ENCODE measurements at regions of chr1 and their contacts with region 1.

Region 1: DNA sequence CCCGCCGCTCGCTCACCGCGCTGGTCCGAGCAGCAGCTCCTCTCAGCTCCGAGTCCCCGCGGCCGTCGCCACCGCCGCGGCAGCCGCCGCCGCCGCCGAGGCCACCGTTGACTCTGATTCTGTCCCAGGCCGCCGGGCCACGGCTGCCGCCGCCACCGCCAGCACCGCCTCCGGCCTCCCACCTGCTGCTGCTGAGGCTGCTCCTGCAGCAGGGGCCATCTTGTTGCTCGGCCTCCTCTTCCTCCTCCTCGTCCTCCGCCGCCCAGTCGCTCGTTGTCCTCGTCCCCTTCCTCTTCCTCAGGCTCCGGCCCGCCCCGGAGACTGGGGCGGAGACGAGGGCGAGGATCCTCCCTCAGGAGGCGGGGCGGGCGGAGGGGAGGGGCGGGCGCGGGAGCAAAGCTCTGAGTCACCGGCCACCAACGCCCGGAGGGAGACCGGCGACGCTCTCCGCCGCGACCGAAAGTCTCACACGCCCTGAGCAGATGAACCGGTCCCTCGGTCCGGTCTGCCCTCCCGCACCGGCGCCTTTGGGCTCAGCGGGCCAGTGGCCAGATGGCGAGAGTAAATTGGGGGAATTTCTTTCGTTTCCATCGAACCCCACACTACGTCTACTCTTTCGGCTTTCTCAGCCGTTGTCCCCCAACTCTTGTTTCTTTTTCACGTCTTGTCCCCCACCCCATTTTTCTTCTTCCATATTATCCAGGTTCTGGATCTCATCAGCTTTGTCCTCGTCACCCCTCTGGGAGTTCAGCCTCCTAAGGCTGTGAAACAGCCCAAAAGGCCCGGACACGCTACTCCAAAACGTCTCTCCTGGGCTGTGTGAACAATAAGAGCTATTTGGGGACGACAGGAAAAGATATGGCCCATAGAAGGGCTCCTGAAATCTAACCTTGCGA is at the start of gene RC3H1:
- DNase-seq: peak; percentile 84 to 91 (median 85)
- H3K4me3 ChIP-seq: peak within 1 kb of the TSS; percentile 65 to 100
- H3K4me3 Mint-ChIP-seq: peak within 1 kb of the TSS; percentile 98 to 100 (median 98)
- H3K27ac ChIP-seq: peak within 1 kb of the TSS; percentile 80
- H3K27ac Mint-ChIP-seq: peak within 1 kb of the TSS; percentile 98 to 99 (median 99)
- H3K4me1 ChIP-seq: peaks cover 41% of the 10 kb centered on the region
- H3K4me1 Mint-ChIP-seq: peaks cover 30 to 60% (median 39%) of the 10 kb centered on the region in 4 donors
- H3K27me3 ChIP-seq: no peaks in the 10 kb centered on the region
- H3K27me3 Mint-ChIP-seq: no peaks in the 10 kb centered on the region
- total RNA-seq, gene RC3H1: 49.2 TPM

Region 2: GRCh38 chr1:173476664-173477285 is 545.6 kb before region 1 on chr1:
- CTCF ChIA-PET with region 1: no interaction called
- POLR2A ChIA-PET with region 1: interaction called, 3 read pairs
- intact Hi-C with region 1: loop called (anchors 5 kb)
- DNase-seq: peak; percentile 77 to 90 (median 84)
- H3K4me3 ChIP-seq: peak overlapping the region; percentile 93
- H3K4me3 Mint-ChIP-seq: peak overlapping the region; percentile 89 to 94 (median 91)
- H3K27ac ChIP-seq: peak overlapping the region; percentile 89
- H3K27ac Mint-ChIP-seq: peak overlapping the region; percentile 89 to 95 (median 91)
- H3K4me1 ChIP-seq: peaks cover 61% of the 10 kb centered on the region
- H3K4me1 Mint-ChIP-seq: peaks cover 38 to 68% (median 55%) of the 10 kb centered on the region in 4 donors
- H3K27me3 ChIP-seq: no peaks in the 10 kb centered on the region
- H3K27me3 Mint-ChIP-seq: no peaks in the 10 kb centered on the region

Region 3: DNA sequence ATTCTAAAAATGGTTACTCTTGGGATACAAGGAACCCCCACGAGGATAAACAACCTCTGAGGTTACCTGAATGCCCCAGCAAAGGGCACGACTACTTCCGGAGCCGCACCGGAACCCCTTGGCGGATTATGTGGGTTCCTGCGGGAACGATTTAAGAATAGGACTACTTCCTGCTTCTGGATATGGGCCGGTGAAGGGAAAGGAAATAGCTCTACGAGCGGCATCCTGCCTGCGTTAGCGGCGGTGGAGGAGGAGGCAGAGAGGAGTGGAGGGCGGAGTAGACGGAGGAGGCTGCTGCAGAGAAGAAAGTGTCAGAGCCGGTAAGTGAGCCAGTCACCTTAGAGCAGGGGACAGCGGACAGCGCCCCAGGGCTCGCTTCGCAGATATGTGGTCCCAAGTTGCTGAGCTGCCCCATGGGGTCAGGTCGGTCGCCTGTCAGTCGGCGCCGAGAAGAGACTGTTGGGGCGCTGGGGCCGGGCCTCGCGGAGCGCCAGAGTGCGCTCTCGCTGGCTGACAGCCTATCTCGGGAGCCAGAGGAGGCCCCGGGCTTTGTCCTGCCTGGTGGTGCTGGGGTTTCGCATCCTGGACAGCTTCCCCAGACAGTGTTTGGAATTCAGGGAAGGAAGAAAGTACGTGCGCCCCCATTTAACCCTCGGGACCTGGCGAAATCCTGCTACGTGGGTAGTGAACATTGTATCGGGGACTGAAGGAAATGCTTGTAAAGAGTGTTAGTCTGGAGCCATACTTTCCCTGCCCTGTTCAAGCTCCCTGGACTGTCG is 307.4 kb before region 1 on chr1 and contains the start of gene KLHL20:
- CTCF ChIA-PET with region 1: no interaction called
- POLR2A ChIA-PET with region 1: interaction called, 9 read pairs
- intact Hi-C with region 1: loop called (anchors 5 kb)
- DNase-seq: peak; percentile 89 to 93 (median 91)
- H3K4me3 ChIP-seq: peak within 1 kb of the TSS; percentile 47 to 73
- H3K4me3 Mint-ChIP-seq: peak within 1 kb of the TSS; percentile 95 to 100 (median 97)
- H3K27ac ChIP-seq: peak within 1 kb of the TSS; percentile 78
- H3K27ac Mint-ChIP-seq: peak within 1 kb of the TSS; percentile 92 to 98 (median 97)
- H3K4me1 ChIP-seq: peaks cover 34% of the 10 kb centered on the region
- H3K4me1 Mint-ChIP-seq: peaks cover 18 to 33% (median 25%) of the 10 kb centered on the region in 4 donors
- H3K27me3 ChIP-seq: peaks cover 5% of the 10 kb centered on the region
- H3K27me3 Mint-ChIP-seq: peaks cover 14 to 15% of the 10 kb centered on the region in 2 donors
- total RNA-seq, gene KLHL20: 41.0 to 43.9 TPM

Region 4: DNA sequence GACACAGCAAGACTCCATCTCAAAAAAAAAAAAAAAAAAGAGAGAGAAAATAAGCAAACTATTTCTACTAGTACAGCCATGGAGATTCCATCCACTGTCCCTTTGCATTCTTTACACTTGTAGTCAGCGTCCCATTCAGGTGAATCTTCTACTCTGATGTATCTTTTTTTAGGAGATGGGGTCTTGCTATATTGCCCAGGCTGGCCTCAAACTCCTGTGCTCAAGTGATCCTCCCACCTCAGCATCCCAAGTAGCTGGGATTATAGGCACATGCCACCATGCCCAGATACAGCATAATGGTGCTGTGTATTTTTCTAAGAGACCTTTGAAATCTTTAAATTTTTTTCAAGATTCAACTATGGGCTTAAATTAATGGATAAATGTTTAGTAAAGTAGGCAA is 189.6 kb before region 1 on chr1:
- CTCF ChIA-PET with region 1: no interaction called
- POLR2A ChIA-PET with region 1: no interaction called
- intact Hi-C with region 1: no loop called
- DNase-seq: no peak
- H3K4me3 ChIP-seq: no peak overlapping the region
- H3K4me3 Mint-ChIP-seq: no peak overlapping the region
- H3K27ac ChIP-seq: no peak overlapping the region
- H3K27ac Mint-ChIP-seq: no peak overlapping the region
- H3K4me1 ChIP-seq: peaks cover 3% of the 10 kb centered on the region
- H3K4me1 Mint-ChIP-seq: peaks cover 0 to 2% (median 0%) of the 10 kb centered on the region in 4 donors
- H3K27me3 ChIP-seq: no peaks in the 10 kb centered on the region
- H3K27me3 Mint-ChIP-seq: no peaks in the 10 kb centered on the region

Region 5: DNA sequence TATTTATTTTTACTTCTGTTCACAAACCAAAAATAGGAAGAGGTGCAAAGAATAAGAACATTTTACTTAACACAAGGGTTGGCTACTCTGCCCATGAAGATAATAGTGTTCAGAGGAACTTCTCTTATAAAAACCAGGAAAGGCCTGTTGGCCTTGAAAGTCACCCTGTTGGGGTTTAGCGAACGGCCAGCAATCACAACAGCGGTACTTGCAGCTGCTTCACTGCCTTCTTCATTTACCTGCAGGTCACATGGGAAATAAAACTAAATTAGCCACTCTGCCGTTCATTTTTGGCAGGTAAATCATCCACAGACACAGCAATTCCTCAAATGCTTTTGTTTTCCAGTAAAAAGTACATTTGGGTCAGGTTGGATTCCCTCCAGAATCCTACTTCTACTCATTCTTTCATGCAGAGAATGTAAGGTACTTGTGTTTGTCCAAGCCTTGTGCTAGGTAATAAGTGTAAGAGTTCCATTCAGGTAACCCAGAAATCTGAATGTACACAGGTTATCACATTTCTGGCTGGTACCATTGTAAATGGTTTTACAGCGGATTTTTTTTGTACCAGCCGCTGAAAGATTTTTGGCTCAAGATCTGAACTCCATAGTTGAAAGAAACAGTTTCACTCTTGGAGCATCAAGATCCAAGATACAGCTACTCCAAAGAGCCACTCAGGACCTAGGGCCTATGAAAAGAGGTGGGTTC is 118.3 kb before region 1 on chr1:
- CTCF ChIA-PET with region 1: no interaction called
- POLR2A ChIA-PET with region 1: no interaction called
- intact Hi-C with region 1: no loop called
- DNase-seq: no peak
- H3K4me3 ChIP-seq: no peak overlapping the region
- H3K4me3 Mint-ChIP-seq: no peak overlapping the region
- H3K27ac ChIP-seq: no peak overlapping the region
- H3K27ac Mint-ChIP-seq: no peak overlapping the region
- H3K4me1 ChIP-seq: no peaks in the 10 kb centered on the region
- H3K4me1 Mint-ChIP-seq: peaks cover 6 to 17% (median 13%) of the 10 kb centered on the region in 4 donors
- H3K27me3 ChIP-seq: no peaks in the 10 kb centered on the region
- H3K27me3 Mint-ChIP-seq: no peaks in the 10 kb centered on the region

Region 6: DNA sequence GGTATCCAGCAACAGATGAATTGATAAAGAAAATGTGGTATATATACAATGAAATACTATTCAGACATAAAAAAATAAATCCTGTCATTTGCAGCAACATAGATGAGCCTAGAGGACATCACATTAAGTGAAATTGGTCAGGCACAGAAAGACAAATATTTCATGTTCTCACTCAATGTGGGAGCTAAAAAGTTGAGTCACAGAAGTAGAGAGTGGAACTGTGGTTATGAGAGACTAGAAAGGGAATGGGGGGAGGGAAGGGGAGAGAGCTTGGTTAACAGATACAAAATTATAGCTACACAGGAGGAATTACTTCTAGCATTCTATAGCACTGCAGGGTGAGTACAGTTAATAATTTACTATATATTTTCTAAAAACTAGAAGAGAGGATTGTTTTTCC is 68.1 kb before region 1 on chr1:
- CTCF ChIA-PET with region 1: no interaction called
- POLR2A ChIA-PET with region 1: no interaction called
- intact Hi-C with region 1: no loop called
- DNase-seq: no peak
- H3K4me3 ChIP-seq: no peak overlapping the region
- H3K4me3 Mint-ChIP-seq: no peak overlapping the region
- H3K27ac ChIP-seq: no peak overlapping the region
- H3K27ac Mint-ChIP-seq: peak overlapping the region in 2 of 7 donors; percentile 19 to 85
- H3K4me1 ChIP-seq: no peaks in the 10 kb centered on the region
- H3K4me1 Mint-ChIP-seq: peaks cover 0 to 12% (median 7%) of the 10 kb centered on the region in 4 donors
- H3K27me3 ChIP-seq: no peaks in the 10 kb centered on the region
- H3K27me3 Mint-ChIP-seq: no peaks in the 10 kb centered on the region

Region 7: GRCh38 chr1:174036204-174036603 is 13.9 kb after region 1 on chr1:
- CTCF ChIA-PET with region 1: no interaction called
- POLR2A ChIA-PET with region 1: interaction called, 11 read pairs
- intact Hi-C with region 1: no loop called
- DNase-seq: no peak
- H3K4me3 ChIP-seq: no peak overlapping the region
- H3K4me3 Mint-ChIP-seq: no peak overlapping the region
- H3K27ac ChIP-seq: no peak overlapping the region
- H3K27ac Mint-ChIP-seq: no peak overlapping the region
- H3K4me1 ChIP-seq: no peaks in the 10 kb centered on the region
- H3K4me1 Mint-ChIP-seq: no peaks in the 10 kb centered on the region
- H3K27me3 ChIP-seq: no peaks in the 10 kb centered on the region
- H3K27me3 Mint-ChIP-seq: peaks cover 2 to 4% of the 10 kb centered on the region in 2 donors

Region 8: DNA sequence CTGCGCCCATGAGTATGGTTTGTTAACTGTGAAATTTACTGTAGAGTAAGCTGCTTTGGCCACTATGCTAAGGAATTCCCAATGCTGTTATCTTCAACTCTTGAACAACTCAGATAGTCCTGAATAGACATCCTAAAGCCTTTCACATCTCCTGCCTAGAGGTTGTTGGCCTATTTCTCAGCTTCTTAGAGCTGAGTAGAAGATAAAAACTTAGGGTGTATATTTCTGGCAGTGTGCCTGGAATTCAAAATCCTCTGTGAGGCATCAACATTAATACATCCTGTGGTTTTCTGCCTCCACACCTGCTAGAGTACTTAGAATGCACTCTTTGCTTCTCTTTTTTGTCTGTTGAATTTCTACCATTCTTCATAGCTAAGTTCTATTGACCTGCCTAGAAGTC is 45.7 kb after region 1 on chr1:
- CTCF ChIA-PET with region 1: no interaction called
- POLR2A ChIA-PET with region 1: interaction called, 7 read pairs
- intact Hi-C with region 1: loop called (anchors 5 kb)
- DNase-seq: peak in 4 of 5 donors; percentile 20 to 37 (median 36)
- H3K4me3 ChIP-seq: no peak overlapping the region
- H3K4me3 Mint-ChIP-seq: no peak overlapping the region
- H3K27ac ChIP-seq: no peak overlapping the region
- H3K27ac Mint-ChIP-seq: peak overlapping the region in 3 of 7 donors; percentile 9 to 53 (median 31)
- H3K4me1 ChIP-seq: peaks cover 8% of the 10 kb centered on the region
- H3K4me1 Mint-ChIP-seq: peaks cover 6 to 10% (median 9%) of the 10 kb centered on the region in 4 donors
- H3K27me3 ChIP-seq: no peaks in the 10 kb centered on the region
- H3K27me3 Mint-ChIP-seq: peaks cover 3 to 4% of the 10 kb centered on the region in 2 donors

Region 9: DNA sequence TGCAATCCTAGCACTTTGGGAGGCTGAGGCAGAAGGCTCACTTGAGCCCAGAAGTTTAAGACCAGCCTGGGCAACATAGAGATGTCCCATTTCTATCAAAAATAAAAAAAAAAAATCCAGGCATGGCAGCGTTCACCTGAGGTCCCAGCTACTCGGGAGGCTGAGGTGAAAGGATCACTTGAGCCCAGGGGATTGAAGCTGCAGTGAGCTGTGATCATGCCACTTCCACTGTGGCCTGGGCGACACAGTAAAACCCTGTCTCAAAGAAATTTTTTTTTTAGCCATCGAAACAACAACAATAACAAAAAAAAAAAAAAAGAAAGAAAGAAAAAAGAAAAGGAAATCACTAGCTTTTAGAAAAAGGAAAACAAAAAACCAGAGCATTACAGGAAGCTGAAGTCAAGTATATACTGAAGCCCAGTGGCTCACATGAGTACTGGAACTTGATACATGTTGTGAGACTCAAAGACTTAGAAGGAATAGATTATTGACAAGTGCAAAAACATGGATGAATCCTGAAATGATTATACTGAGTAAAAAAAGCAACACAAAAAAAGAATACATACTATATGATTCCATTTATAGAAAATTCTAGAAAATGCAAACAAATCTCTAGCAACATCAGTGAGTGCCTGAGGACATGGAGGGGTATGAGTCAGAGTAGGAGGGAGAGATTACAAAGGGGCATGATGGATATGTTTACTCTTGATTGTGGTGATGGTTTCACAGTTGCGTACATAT is 130.9 kb after region 1 on chr1:
- CTCF ChIA-PET with region 1: interaction called, 6 read pairs
- POLR2A ChIA-PET with region 1: interaction called, 13 read pairs
- intact Hi-C with region 1: no loop called
- DNase-seq: peak in 1 of 5 donors; percentile 19
- H3K4me3 ChIP-seq: no peak overlapping the region
- H3K4me3 Mint-ChIP-seq: peak overlapping the region in 6 of 8 donors; percentile 1 to 47 (median 34)
- H3K27ac ChIP-seq: peak overlapping the region; percentile 21
- H3K27ac Mint-ChIP-seq: peak overlapping the region in 6 of 7 donors; percentile 14 to 63 (median 26)
- H3K4me1 ChIP-seq: peaks cover 42% of the 10 kb centered on the region
- H3K4me1 Mint-ChIP-seq: peaks cover 19 to 38% (median 25%) of the 10 kb centered on the region in 4 donors
- H3K27me3 ChIP-seq: no peaks in the 10 kb centered on the region
- H3K27me3 Mint-ChIP-seq: no peaks in the 10 kb centered on the region

Region 10: DNA sequence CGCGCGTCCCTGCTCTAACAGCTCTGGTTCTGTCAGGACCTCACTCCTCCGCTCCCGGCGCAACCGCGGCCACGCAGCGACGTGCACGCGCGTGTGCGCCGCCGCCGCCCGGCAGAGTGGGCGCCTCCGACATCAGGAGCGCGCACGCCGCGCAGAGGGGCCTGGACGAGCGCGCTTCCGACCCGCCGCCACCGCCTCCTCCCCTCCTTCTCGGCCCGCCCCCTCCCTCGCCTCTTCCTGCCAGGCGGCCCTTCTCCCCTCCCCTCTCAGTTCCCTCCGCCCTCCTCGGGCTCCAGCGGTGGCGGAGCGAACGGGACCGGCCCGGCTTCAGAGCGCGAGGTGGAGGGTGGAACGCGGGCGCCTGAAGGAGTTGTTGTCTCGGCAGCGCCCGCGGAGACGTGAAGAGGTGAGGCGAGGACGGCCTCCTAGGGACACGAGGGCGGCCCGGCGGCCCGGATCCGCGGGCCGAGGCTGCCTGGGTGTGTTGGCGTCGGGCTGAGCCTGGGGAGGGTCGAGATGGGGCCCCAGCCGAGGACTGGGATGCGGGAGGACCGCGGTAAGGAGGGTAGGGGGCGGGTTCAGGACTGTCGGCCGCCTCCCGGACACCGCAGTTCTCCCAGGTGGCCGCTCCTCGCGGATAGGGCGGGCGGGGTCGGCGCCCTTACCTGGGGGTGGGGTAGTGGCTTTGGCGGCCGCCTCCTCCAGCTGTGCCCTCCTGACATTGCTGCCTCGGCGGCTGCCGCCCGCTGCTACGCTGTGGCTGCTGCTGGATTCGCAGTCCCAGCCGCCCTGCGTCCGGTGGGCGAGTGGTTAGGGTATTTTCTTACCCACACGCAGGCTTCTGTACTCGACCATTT is 137.2 kb after region 1 on chr1 and contains the start of gene RABGAP1L:
- CTCF ChIA-PET with region 1: interaction called, 3 read pairs
- POLR2A ChIA-PET with region 1: interaction called, 10 read pairs
- intact Hi-C with region 1: loop called (anchors 1 kb)
- DNase-seq: peak; percentile 91 to 96 (median 95)
- H3K4me3 ChIP-seq: peak within 1 kb of the TSS; percentile 88 to 95
- H3K4me3 Mint-ChIP-seq: peak within 1 kb of the TSS; percentile 94 to 99 (median 97)
- H3K27ac ChIP-seq: peak within 1 kb of the TSS; percentile 92
- H3K27ac Mint-ChIP-seq: peak within 1 kb of the TSS; percentile 92 to 99 (median 98)
- H3K4me1 ChIP-seq: peaks cover 56% of the 10 kb centered on the region
- H3K4me1 Mint-ChIP-seq: peaks cover 40 to 67% (median 52%) of the 10 kb centered on the region in 4 donors
- H3K27me3 ChIP-seq: no peaks in the 10 kb centered on the region
- H3K27me3 Mint-ChIP-seq: no peaks in the 10 kb centered on the region
- total RNA-seq, gene RABGAP1L: 113 to 114 TPM

Measured in CD4-positive, alpha-beta memory T cell (primary cell).